ENCODE measurements at regions of chr6 and their contacts with region 1.

Region 1: DNA sequence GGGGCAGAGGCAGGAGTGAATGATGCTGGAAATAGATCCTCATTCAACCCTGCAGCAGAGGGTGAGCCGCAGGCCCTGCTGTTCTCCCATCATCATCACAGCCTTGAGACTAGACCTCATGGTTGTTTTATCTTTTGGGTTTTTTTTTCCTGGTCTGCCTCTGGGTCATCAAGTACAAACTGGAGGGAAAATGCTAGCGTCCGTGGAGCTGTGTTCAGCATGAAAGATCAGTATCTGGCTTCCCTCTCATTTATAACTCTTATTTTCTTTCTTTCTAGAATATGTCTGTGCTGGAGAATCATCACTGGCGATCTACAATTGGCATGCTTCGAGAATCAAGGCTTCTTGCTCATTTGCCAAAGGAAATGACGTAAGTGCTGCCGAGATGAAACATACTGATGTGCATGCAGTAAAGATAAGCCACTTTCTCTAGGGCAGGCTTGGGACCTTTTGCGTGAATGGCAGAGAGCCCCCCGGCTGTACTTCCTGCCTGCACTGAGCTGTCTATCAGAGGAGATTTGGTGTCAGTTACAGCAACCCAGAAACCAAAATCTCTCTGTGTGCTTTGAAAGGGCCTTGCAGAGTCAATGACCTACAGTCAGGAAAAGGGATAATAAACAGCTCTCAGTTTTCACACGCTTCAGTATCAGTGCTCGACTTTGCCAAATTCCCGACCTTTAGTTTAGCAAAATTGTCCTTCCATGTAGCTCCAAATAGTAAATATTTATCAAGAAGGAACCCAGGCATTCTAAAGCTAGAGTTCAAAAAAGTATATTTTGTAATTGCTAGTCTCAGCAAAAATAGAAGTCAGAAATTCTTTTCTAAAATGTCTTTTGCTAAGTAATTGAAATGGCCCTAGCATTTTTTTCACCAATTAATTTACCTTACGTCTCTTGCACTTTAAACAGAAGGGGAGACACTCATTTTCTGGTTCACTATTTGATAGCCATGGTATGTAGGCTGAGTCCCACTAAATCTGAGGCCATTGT is 76.3 kb downstream of the MTFR2 start:
- DNase-seq: peak in 4 of 5 donors; percentile 34 to 45 (median 42)
- ATAC-seq: peak; percentile 77 to 92 (median 88)
- H3K4me3 ChIP-seq: no peak overlapping the region
- H3K27ac ChIP-seq: peak overlapping the region; percentile 23 to 69 (median 52)
- H3K4me1 ChIP-seq: peaks cover 0 to 19% (median 16%) of the 10 kb centered on the region in 12 donors
- H3K27me3 ChIP-seq: no peaks in the 10 kb centered on the region
- CTCF ChIP-seq: no peak
- POLR2A ChIP-seq: no peak

Region 2: DNA sequence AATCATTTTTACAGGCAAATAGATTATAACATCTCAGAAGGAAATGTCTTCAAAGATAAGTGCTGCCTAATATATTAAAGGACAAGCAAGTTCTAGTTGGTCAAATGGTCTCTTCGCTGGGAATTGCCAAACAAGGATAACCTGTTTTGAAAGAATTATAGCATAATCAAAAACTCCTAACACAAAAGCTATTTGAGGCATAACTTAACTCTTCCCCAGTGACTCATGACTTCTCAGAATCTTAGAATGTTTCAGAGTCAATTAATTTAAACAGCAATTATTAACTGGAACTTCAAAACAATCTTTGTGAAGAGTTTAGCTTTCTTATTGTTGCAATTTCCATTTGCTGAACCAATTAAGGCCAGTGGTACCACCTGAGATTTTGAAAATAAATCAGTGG is 50.3 kb before region 1 on chr6:
- intact Hi-C with region 1: loop called in 1 of 10 experiments (anchors 10 kb)
- DNase-seq: no peak
- ATAC-seq: no peak
- H3K4me3 ChIP-seq: no peak overlapping the region
- H3K27ac ChIP-seq: peak overlapping the region in 3 of 12 donors; percentile 2 to 49 (median 3)
- H3K4me1 ChIP-seq: peaks cover 0 to 38% (median 21%) of the 10 kb centered on the region in 12 donors
- H3K27me3 ChIP-seq: no peaks in the 10 kb centered on the region
- CTCF ChIP-seq: no peak
- POLR2A ChIP-seq: no peak

Region 3: GRCh38 chr6:136334853-136335252 is 161.0 kb after region 1 on chr6:
- intact Hi-C with region 1: no loop called
- DNase-seq: no peak
- ATAC-seq: no peak
- H3K4me3 ChIP-seq: no peak overlapping the region
- H3K27ac ChIP-seq: no peak overlapping the region
- H3K4me1 ChIP-seq: peaks cover 0 to 3% (median 0%) of the 10 kb centered on the region in 12 donors
- H3K27me3 ChIP-seq: peaks cover 0 to 5% (median 0%) of the 10 kb centered on the region in 9 donors
- CTCF ChIP-seq: no peak
- POLR2A ChIP-seq: no peak

Region 4: GRCh38 chr6:136647363-136647852 is 473.6 kb after region 1 on chr6:
- intact Hi-C with region 1: no loop called
- DNase-seq: peak in 2 of 5 donors; percentile 29 to 38
- ATAC-seq: peak; percentile 15 to 72 (median 64)
- H3K4me3 ChIP-seq: no peak overlapping the region
- H3K27ac ChIP-seq: peak overlapping the region in 11 of 12 donors; percentile 10 to 76 (median 48)
- H3K4me1 ChIP-seq: peaks cover 0 to 51% (median 23%) of the 10 kb centered on the region in 12 donors
- H3K27me3 ChIP-seq: no peaks in the 10 kb centered on the region
- CTCF ChIP-seq: no peak
- POLR2A ChIP-seq: no peak